ENCODE measurements at regions of chr3 and their contacts with region 1.

Region 1: DNA sequence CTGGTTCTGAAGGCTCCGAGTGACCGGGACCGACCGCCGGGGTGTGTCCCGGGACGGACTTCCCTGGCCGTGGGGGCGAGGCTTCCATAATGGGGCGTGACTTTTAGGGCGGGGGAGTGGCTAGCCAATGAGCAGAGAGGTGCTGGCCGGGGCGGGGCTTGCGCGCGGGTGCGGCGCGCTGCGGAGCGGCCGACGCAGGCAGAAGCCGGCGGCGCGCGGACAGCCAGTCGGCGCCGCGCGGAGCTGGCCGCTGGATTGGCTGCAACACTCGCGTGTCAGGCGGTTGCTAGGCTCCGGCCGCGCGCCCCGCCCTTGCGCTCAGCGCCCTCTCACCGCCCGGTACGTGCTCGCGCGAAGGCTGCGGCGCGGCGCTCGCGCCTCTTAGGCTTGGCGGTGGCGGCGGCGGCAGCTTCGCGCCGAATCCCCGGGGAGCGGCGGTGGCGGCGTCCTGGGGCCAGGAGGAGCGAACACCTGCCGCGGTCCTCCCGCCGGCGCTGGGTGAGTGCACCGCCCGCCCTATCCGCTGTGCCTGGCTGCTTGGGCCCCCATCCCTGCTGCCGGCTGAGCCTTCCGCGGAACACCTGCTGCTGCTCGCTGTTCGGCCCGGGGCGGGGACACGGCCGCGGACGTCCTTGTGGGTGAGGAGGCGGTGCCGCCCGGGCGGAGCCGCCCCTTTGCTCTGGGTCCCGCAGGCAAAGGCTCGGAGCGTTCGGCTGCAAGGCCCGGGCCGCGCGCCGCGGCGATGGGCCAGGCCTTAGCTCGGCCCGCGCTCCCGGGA is at the start of gene DAG1:
- DNase-seq: peak; percentile 97
- H3K4me3 Mint-ChIP-seq: peak within 1 kb of the TSS; percentile 83
- H3K27ac Mint-ChIP-seq: peak within 1 kb of the TSS; percentile 85
- H3K4me1 Mint-ChIP-seq: peaks cover 14% of the 10 kb centered on the region
- H3K27me3 Mint-ChIP-seq: no peaks in the 10 kb centered on the region
- total RNA-seq, gene DAG1: 6.9 to 8.2 TPM

Region 2: DNA sequence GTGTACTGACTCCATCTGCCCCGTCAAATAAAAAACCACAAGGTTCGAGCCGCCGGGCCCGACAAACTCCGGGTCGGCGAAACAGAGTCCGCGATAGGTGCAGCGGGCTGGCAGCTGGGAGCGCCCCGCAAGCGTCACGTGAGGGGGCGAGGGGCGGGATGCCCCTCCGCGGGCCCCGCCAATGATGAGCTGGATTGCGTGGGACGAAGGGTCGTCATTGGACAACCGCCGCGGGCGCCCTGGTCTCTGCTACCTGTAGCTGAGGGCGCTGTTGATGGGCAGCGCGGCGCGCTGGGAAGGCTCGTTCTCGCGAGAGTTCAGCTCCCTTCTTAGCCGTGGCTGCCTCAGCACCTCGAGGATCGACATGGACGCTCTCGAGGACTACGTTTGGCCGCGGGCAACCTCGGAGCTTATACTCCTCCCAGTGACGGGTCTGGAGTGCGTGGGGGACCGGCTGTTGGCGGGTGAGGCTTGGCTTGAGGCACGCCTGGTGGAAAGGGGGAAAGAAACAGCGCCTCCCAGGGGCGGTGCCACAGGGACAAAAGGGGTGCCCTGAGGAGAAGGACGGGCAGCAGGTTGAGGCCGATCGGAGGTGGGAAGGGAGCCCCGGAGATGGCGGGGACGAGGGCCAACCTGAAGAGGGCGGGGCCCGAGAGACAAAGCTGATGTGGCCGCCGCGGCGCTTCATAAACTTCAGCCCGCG is 462.9 kb before region 1 on chr3 and contains the start of gene WDR6:
- CTCF ChIA-PET with region 1: no interaction called
- intact Hi-C with region 1: loop called (anchors 1 kb)
- DNase-seq: peak; percentile 99
- H3K4me3 Mint-ChIP-seq: peak within 1 kb of the TSS; percentile 99
- H3K27ac Mint-ChIP-seq: peak within 1 kb of the TSS; percentile 99
- H3K4me1 Mint-ChIP-seq: peaks cover 19% of the 10 kb centered on the region
- H3K27me3 Mint-ChIP-seq: no peaks in the 10 kb centered on the region
- total RNA-seq, gene WDR6: 119 to 120 TPM

Region 3: GRCh38 chr3:49028673-49029562 is 441.2 kb before region 1 on chr3 and contains the start of gene IMPDH2:
- CTCF ChIA-PET with region 1: no interaction called
- intact Hi-C with region 1: loop called (anchors 1 kb)
- DNase-seq: peak; percentile 94
- H3K4me3 Mint-ChIP-seq: peak within 1 kb of the TSS; percentile 91
- H3K27ac Mint-ChIP-seq: peak within 1 kb of the TSS; percentile 89
- H3K4me1 Mint-ChIP-seq: peaks cover 53% of the 10 kb centered on the region
- H3K27me3 Mint-ChIP-seq: no peaks in the 10 kb centered on the region
- total RNA-seq, gene IMPDH2: 565 to 593 TPM

Region 4: DNA sequence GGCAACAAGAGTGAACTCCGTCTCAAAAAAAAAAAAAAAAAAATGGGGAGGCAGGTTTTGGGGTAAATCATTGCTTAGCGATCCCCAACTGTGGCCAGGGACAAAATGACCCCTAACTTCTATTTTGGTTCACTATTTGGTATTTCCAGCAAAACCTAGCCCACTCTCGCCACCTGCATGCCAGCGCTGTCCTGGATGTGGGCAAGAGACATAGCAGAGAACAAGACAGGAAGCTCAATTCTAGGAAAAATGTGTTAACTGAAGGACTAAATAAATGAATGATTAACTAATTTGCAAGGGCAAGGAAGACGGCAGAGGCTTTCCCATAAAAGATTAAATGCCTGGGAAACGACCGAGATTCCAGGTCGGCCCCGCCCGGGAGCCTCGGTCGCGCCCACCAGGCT is 41.4 kb before region 1 on chr3:
- CTCF ChIA-PET with region 1: no interaction called
- intact Hi-C with region 1: loop called (anchors 1 kb)
- DNase-seq: no peak
- H3K4me3 Mint-ChIP-seq: peak overlapping the region; percentile 90
- H3K27ac Mint-ChIP-seq: peak overlapping the region; percentile 93
- H3K4me1 Mint-ChIP-seq: peaks cover 12% of the 10 kb centered on the region
- H3K27me3 Mint-ChIP-seq: no peaks in the 10 kb centered on the region

Region 5: GRCh38 chr3:49668414-49668797 is 198.3 kb after region 1 on chr3:
- CTCF ChIA-PET with region 1: no interaction called
- intact Hi-C with region 1: no loop called
- DNase-seq: no peak
- H3K4me3 Mint-ChIP-seq: no peak overlapping the region
- H3K27ac Mint-ChIP-seq: no peak overlapping the region
- H3K4me1 Mint-ChIP-seq: peaks cover 10% of the 10 kb centered on the region
- H3K27me3 Mint-ChIP-seq: no peaks in the 10 kb centered on the region

Region 6: GRCh38 chr3:50450209-50450921 is 980.2 kb after region 1 on chr3:
- CTCF ChIA-PET with region 1: no interaction called
- intact Hi-C with region 1: no loop called
- DNase-seq: peak; percentile 89
- H3K4me3 Mint-ChIP-seq: peak overlapping the region; percentile 76
- H3K27ac Mint-ChIP-seq: peak overlapping the region; percentile 87
- H3K4me1 Mint-ChIP-seq: peaks cover 10% of the 10 kb centered on the region
- H3K27me3 Mint-ChIP-seq: no peaks in the 10 kb centered on the region